Activated naive CD4-positive, alpha-beta T cell treated with anti-CD3 and anti-CD28 coated beads for 36 hours (primary cell): ENCODE measurements at regions of chr1 and their contacts with region 1.

Region 1: GRCh38 chr1:167270349-167271092 is 49.8 kb downstream of the POU2F1 start:
- DNase-seq: no peak
- H3K4me3 Mint-ChIP-seq: no peak overlapping the region
- H3K27ac Mint-ChIP-seq: no peak overlapping the region
- H3K4me1 Mint-ChIP-seq: peaks cover 37% of the 10 kb centered on the region
- H3K27me3 Mint-ChIP-seq: no peaks in the 10 kb centered on the region

Region 2: GRCh38 chr1:167066333-167067122 is 204.0 kb before region 1 on chr1:
- CTCF ChIA-PET with region 1: interaction called, 4 read pairs
- intact Hi-C with region 1: loop called (anchors 2 kb)
- DNase-seq: peak; percentile 82
- H3K4me3 Mint-ChIP-seq: no peak overlapping the region
- H3K27ac Mint-ChIP-seq: no peak overlapping the region
- H3K4me1 Mint-ChIP-seq: peaks cover 2% of the 10 kb centered on the region
- H3K27me3 Mint-ChIP-seq: no peaks in the 10 kb centered on the region

Region 3: DNA sequence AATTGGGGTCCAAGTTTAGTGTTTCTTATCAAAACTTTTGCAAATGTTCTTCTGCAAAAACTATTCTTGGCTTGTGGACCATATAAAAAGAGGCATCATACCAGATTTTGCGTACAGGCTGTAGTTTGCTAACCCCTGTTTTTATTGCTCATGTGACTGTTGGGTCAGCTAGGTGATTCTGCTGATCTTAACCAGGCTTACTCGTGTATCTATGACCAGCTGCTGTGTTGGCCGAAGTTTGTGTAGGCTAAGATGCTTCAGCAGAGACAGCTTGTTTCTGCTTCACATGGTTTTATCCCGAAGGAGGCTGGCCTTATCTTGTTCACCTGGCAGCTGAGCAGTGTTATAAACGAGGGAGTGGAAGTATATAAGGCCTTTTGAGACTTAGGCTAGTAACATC is 11.7 kb before region 1 on chr1:
- CTCF ChIA-PET with region 1: interaction called, 10 read pairs
- intact Hi-C with region 1: no loop called
- DNase-seq: no peak
- H3K4me3 Mint-ChIP-seq: no peak overlapping the region
- H3K27ac Mint-ChIP-seq: no peak overlapping the region
- H3K4me1 Mint-ChIP-seq: peaks cover 32% of the 10 kb centered on the region
- H3K27me3 Mint-ChIP-seq: no peaks in the 10 kb centered on the region

Region 4: GRCh38 chr1:167342846-167343245 is 72.3 kb after region 1 on chr1:
- CTCF ChIA-PET with region 1: interaction called, 12 read pairs
- intact Hi-C with region 1: loop called (anchors 1 kb)
- DNase-seq: no peak
- H3K4me3 Mint-ChIP-seq: no peak overlapping the region
- H3K27ac Mint-ChIP-seq: no peak overlapping the region
- H3K4me1 Mint-ChIP-seq: peaks cover 3% of the 10 kb centered on the region
- H3K27me3 Mint-ChIP-seq: no peaks in the 10 kb centered on the region

Region 5: GRCh38 chr1:167409183-167409582 is 138.7 kb after region 1 on chr1:
- CTCF ChIA-PET with region 1: interaction called, 7 read pairs
- intact Hi-C with region 1: loop called (anchors 2 kb)
- DNase-seq: no peak
- H3K4me3 Mint-ChIP-seq: no peak overlapping the region
- H3K27ac Mint-ChIP-seq: no peak overlapping the region
- H3K4me1 Mint-ChIP-seq: peaks cover 15% of the 10 kb centered on the region
- H3K27me3 Mint-ChIP-seq: no peaks in the 10 kb centered on the region

Region 6: DNA sequence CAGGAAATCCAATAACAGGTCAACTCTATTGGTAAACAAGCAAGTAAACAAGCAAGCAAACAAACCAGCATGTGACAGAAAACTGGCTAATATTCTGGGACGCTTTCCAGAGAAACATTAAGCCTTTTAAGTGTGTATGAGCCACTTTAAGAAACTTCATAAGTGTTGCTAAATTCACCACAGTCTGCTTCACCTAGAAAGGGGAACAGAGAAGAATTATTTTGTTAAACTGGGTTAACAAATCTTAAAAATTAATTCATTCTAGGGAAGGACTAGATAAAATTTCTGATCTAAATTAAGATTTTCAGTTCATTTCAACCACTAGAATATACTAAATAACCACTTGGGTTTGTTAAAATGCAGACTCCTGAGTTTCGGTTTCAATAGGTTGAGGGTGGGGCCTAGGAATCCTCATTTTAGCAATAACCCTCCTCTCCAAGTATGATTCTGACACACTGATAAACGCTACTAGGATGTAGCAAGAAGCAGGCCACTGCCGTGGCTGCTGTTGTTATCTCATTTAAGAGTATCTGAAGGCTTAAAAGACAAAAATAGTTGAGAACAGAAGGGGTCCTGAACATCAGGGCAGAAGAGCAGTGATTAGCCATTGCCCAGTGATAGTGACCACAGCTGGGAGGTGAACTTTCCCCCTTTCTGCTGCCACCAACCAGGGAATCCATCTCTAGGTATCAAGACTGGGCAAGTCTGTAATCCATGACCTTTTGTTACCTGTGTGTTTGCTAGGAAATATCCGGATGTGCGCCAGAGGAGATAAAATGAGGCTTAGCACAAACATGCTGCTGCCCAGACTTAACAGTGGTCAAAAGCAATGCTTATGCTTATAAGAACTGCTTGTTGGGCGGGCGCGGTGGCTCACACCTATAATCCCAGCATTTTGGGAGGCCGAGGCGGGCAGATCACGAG is 271.9 kb after region 1 on chr1:
- CTCF ChIA-PET with region 1: interaction called, 16 read pairs
- intact Hi-C with region 1: loop called (anchors 1 kb)
- DNase-seq: no peak
- H3K4me3 Mint-ChIP-seq: no peak overlapping the region
- H3K27ac Mint-ChIP-seq: no peak overlapping the region
- H3K4me1 Mint-ChIP-seq: peaks cover 34% of the 10 kb centered on the region
- H3K27me3 Mint-ChIP-seq: no peaks in the 10 kb centered on the region